ENCODE measurements at regions of chr20 and their contacts with region 1.

Region 1: GRCh38 chr20:47379433-47380150 is 23.1 kb upstream of the ZMYND8 start:
- DNase-seq: no peak
- CTCF ChIP-seq: no peak

Region 2: GRCh38 chr20:47196091-47197081 is 183.2 kb before region 1 on chr20:
- in situ Hi-C with region 1: loop called (anchors 5 kb)
- DNase-seq: peak; percentile 86
- CTCF ChIP-seq: peak; percentile 93

Region 3: GRCh38 chr20:47950073-47950913 is 570.7 kb after region 1 on chr20:
- in situ Hi-C with region 1: no loop called
- DNase-seq: no peak
- CTCF ChIP-seq: no peak

Region 4: DNA sequence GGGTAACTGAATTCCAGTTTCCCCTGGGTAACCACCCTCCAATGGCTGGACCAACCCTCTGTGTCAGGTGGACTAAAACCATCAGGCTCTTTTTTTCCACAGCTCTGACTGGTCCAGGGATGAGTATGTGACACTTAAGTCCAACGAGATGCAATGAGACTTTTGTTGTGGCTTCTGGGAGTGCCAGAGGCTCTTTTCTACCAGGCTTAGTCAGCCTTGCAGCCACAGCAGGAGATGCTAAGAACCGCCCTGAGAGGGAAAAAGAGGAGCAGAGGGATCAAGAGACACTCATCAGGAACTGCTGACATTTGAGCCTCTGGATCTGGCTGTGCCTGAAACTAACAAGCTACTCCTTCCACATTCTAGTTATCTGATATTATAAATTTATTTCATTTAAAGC is 676.6 kb after region 1 on chr20:
- in situ Hi-C with region 1: no loop called
- DNase-seq: no peak
- CTCF ChIP-seq: no peak

Region 5: DNA sequence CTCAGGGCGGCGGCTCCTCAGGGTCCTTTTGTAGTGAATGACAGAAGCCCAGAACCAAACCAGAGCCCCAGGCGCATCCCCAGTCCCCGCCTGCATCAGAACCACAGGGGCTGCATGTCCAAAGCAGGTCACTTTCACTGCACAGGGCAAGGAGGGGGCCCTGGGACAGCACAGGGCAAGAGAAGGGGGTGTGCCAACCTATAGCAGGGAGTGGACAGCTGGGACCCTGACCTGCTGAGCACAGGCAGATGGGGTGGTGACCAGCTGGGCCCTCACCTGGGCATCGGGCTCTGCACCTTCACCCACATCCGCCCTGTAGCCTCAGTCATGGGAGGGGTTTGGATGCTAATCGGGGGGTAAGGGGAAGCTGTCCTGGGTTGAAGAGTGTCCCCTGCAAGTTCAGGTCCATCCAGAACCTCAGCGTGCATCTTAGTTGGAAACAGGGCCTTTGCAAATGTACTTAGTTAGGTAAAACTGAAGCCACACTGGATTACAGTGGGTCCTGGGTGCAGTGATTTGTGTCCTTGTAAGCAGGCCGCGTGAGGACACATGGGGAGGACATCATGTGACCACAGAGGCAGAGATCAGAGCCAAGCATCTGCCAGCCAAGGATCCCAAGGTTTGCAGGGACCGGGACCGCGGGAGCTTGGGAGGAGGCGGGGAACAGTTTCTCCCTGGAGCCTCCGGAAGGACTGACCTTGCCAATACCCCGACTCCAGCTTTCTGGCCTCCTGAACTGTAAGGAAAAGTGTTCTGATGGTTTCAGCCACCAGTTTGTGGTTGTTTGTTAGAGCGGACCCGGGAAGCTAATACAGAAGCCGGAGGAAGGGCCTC is 947.1 kb after region 1 on chr20:
- in situ Hi-C with region 1: no loop called
- DNase-seq: no peak
- CTCF ChIP-seq: no peak

Measured in GM13976 (cell line).